Left cardiac atrium (tissue), 4 donors: ENCODE measurements at regions of chr4 and their contacts with region 1.

Region 1: GRCh38 chr4:11720292-11720691 is 291.6 kb upstream of the HS3ST1 start:
- DNase-seq: no peak
- ATAC-seq: peak; percentile 60 to 76

Region 2: DNA sequence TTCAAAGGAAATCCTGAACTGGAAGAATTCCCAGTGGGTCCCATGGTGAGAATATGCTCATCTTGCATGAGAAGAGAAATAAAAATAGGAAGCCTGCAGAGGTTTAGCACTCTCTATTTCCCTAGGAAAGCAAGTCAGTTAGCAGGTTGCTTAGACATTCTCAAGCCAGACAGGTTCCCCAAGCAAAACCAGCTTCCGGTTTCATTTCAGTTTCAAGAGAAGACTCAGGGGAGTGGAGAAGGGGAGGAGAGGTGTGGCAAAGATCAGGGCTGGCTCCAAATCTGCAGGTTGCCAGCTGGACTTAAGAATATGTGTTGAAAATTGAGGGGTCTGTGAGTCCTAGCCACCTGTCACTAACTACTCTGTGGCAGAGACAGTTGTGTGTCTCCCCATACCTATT is 1143.3 kb before region 1 on chr4:
- intact Hi-C with region 1: loop called in 1 of 2 experiments (anchors 10 kb)
- DNase-seq: no peak
- ATAC-seq: no peak

Region 3: DNA sequence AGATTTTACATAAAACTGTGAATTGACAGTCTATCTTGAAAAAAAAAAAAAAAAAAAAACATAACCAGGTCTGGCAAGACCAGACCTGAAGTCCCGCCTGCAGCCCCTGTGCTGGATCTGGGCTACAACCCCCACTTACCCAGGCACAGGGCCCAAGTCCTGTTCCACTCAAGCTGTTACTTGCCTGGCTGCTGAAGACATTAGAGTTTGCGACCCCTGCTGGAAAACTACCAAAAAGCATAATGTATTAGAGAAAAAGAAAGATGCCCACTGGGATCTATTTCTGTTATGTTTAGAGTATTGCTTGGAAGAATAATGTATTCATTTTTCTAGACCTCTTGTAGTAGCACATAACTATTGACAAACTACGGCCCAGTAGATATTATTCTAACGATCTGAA is 296.3 kb before region 1 on chr4:
- intact Hi-C with region 1: loop called (anchors 5 to 10 kb)
- DNase-seq: peak; percentile 23
- ATAC-seq: no peak

Region 4: DNA sequence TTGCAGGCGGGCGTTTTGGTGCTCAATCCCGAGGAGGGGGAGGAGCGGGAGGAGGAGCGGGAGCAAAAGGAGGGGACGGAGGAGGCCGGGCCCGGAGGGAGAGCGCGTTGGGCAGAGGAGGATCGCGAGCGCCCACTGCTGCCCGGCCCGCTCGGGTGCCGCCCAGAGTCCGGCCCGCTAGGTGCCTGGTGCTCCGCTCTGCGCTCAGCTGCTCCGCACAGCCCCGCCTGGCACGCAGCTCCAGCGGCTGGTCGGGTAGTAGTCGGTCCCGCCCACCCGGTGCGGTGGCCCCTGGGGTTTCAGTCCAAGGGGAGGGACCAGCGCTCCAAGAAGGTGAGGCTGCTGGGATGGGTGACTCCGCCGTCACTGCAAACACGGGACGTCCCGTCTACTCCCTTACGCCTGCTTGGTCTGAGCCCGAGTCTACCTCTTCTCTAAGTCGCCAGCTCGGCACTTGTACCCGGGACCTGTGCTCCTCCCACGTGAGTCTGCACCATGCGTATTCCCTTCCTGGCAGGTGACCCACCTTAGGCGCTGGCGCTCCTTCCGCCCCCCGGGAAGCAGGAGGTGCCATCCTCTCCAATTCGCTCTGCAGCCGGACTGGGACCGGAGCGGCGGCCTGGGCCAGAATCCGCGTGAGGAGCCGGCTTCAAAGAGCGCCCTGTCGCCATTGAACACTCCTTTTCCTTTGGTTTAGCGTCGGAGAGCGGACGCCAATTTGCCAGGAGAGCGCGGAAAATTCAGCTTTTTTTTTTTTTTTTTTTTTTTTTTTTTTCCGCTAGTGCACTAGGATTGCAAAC is 291.2 kb before region 1 on chr4:
- intact Hi-C with region 1: loop called (anchors 5 to 10 kb)
- DNase-seq: peak; percentile 89
- ATAC-seq: peak; percentile 94 to 98

Region 5: DNA sequence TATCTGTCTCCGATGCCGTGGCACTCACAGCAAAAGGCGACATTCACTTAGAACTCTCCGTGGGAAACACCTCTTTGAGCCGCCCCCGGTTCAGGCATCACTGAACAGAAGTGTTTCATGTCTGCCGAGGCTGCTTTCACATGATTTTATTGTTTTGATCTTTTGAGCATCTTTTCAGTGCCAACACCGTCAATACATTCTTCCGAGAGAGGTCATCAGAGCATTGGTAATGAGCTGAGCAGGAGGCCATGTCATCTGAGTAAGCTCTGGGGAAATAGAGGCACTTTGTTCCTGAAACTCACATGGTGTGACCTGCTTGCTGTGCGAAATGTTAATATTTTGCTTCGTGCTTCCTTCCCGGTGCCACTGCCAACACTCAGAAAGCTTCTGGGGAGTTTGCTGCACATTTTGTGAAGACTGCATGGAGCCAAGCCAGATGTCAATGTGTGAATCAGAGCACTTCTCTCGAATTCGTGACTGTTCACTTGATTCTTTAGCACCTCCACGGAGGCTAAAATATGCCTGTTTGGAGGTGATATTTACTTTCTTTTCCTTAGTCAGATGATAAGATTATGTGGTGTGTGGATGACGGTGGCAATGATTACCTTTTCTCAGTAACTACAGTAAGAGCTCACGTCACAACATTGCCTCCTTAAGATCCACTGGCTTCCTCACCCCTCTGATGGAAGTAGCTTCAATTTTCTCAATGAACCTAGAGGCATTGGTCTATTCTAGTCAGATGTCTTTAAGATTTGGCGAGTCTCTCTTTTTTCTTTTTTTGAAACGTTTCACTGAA is 69.3 kb before region 1 on chr4:
- intact Hi-C with region 1: loop called in 1 of 2 experiments (anchors 2 kb)
- DNase-seq: peak; percentile 20
- ATAC-seq: peak; percentile 23 to 52